AG04450 (cell line): ENCODE measurements at regions of chr11 and their contacts with region 1.

Region 1: GRCh38 chr11:12963792-12964536 is 45.2 kb upstream of the RASSF10 start:
- DNase-seq: peak; percentile 11
- H3K4me3 ChIP-seq: no peak overlapping the region
- H3K27ac ChIP-seq: no peak overlapping the region
- H3K27me3 ChIP-seq: peaks cover 6% of the 10 kb centered on the region
- CTCF ChIP-seq: peak; percentile 89

Region 2: GRCh38 chr11:12979928-12980689 is 16.1 kb after region 1 on chr11:
- CTCF ChIA-PET with region 1: interaction called, 89 read pairs
- POLR2A ChIA-PET with region 1: no interaction called
- DNase-seq: no peak
- H3K4me3 ChIP-seq: no peak overlapping the region
- H3K27ac ChIP-seq: no peak overlapping the region
- H3K27me3 ChIP-seq: peaks cover 51% of the 10 kb centered on the region
- CTCF ChIP-seq: no peak

Region 3: GRCh38 chr11:13174090-13174489 is 210.1 kb after region 1 on chr11:
- CTCF ChIA-PET with region 1: interaction called, 35 read pairs
- POLR2A ChIA-PET with region 1: no interaction called
- DNase-seq: no peak
- H3K4me3 ChIP-seq: no peak overlapping the region
- H3K27ac ChIP-seq: no peak overlapping the region
- H3K27me3 ChIP-seq: peaks cover 3% of the 10 kb centered on the region
- CTCF ChIP-seq: no peak

Region 4: GRCh38 chr11:13189561-13190426 is 225.8 kb after region 1 on chr11:
- CTCF ChIA-PET with region 1: interaction called, 70 read pairs
- POLR2A ChIA-PET with region 1: no interaction called
- DNase-seq: no peak
- H3K4me3 ChIP-seq: no peak overlapping the region
- H3K27ac ChIP-seq: no peak overlapping the region
- H3K27me3 ChIP-seq: no peaks in the 10 kb centered on the region
- CTCF ChIP-seq: no peak

Region 5: DNA sequence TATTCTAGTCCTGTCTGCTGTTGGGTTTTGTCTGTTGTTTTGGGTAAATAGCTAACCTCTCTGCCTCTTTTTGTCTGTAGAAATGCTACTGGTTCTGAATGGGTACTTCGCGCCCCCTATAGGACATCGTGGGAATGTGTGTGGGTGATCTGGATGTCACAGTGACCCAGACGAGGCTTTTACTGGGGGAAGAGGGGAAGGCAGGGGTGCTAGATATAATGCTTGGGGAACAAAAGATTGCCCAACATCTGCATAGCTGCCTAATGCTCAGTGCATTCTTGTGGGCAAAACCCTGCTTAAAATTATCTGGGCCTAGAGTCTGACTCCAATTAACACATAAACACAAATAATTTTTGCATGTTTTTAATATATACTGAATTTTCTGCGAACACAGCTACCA is 371.4 kb after region 1 on chr11:
- CTCF ChIA-PET with region 1: interaction called, 19 read pairs
- POLR2A ChIA-PET with region 1: no interaction called
- DNase-seq: no peak
- H3K4me3 ChIP-seq: no peak overlapping the region
- H3K27ac ChIP-seq: no peak overlapping the region
- H3K27me3 ChIP-seq: no peaks in the 10 kb centered on the region
- CTCF ChIP-seq: peak; percentile 86

Region 6: GRCh38 chr11:13384908-13385640 is 421.1 kb after region 1 on chr11:
- CTCF ChIA-PET with region 1: interaction called, 35 read pairs
- POLR2A ChIA-PET with region 1: no interaction called
- DNase-seq: peak; percentile 41
- H3K4me3 ChIP-seq: no peak overlapping the region
- H3K27ac ChIP-seq: no peak overlapping the region
- H3K27me3 ChIP-seq: no peaks in the 10 kb centered on the region
- CTCF ChIP-seq: peak; percentile 78